Activated CD8-positive, alpha-beta memory T cell treated with anti-CD3 and anti-CD28 coated beads, Interleukin-2, amount 10 ng/mL, durations not matched to agents 7 days and 5 days (primary cell): ENCODE measurements at regions of chr7 and their contacts with region 1.

Region 1: DNA sequence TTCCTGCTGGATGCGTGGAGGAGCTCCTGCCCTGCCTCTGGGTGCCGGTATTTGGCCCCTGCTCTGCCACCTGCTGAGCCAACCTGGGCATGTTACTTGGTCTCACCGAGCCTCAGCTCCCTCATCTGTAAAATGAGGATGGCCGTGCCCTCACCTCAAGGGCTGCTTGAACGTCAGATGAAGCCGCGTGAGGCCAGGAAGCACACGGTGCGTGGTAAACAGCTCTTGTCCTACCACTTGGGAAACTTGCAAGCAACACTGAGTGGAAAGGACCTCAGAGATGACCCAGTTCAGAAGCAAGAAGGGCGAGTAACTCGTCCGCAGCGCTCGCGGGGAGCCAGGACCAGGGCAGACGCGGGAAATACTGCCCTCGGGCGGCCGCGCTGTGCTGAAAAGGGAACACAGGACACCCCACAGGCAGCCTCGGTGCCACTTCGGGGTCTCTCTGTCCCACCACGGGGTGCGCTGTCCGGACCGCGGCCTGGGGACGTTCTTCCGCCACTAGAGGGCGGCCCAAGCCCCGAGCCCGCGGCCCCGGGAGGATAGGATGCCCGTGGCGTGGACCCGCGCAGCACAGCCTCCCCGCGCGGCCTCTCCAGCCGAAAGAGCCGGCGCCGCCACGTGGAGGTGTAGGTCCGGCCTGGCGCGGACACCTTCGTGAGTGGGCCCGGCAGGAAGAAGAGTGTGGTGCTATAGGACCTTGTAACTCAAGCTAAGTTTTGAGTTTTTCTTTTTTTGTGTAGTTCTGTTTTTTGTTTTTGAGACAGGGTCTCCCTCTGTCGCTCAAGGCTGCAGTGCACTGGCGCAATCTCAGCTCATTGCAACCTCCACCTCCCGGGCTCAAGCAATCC is 94.1 kb downstream of the PRKAG2 start:
- DNase-seq: peak; percentile 82
- ATAC-seq: peak; percentile 94
- H3K4me3 Mint-ChIP-seq: peak overlapping the region; percentile 41
- H3K27ac Mint-ChIP-seq: peak overlapping the region; percentile 30
- H3K4me1 Mint-ChIP-seq: peaks cover 7% of the 10 kb centered on the region
- H3K27me3 Mint-ChIP-seq: no peaks in the 10 kb centered on the region

Region 2: DNA sequence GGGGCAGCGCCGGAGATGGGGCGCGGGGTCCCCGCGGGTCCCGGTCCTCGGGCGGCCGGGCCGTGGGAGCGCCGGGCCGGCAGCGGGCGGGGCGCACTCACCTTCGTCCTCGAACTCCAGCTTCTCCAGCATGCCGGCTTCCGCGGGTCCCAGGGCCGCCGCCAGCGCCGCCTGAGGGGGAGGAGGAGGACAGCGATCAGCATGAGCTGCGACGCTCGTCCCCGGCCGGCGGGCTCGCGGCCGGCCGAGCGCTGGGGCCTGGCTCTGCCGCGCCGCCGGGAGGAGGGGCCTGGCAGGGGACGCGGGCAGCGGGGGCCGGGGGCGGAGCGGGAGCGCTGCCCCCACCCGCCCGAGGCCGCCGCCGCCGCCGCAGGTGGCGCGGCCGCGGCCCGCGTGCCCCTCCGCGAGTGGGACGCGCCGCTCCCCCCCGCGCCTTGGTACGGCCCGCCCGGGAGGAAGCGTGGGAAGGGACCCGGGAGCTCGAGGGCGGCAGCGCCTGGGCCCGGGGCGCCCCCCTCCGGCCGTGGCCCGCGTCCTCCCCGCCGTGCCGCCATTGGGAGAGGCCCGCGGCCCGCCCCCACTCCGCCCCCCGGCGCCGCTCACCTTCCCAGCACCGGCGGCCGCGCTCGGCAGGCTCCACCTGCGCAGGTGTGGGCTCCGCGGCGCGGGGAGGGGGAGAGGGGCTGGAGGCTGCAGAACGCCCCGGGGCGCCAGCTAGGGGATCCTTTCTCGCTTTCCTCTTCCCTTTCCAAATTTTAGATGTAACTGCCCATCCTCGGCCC is 150.7 kb before region 1 on chr7:
- CTCF ChIA-PET with region 1: interaction called, 20 read pairs
- DNase-seq: peak; percentile 89
- ATAC-seq: peak; percentile 84
- H3K4me3 Mint-ChIP-seq: peak overlapping the region; percentile 85
- H3K27ac Mint-ChIP-seq: peak overlapping the region; percentile 95
- H3K4me1 Mint-ChIP-seq: peaks cover 29% of the 10 kb centered on the region
- H3K27me3 Mint-ChIP-seq: no peaks in the 10 kb centered on the region

Region 3: DNA sequence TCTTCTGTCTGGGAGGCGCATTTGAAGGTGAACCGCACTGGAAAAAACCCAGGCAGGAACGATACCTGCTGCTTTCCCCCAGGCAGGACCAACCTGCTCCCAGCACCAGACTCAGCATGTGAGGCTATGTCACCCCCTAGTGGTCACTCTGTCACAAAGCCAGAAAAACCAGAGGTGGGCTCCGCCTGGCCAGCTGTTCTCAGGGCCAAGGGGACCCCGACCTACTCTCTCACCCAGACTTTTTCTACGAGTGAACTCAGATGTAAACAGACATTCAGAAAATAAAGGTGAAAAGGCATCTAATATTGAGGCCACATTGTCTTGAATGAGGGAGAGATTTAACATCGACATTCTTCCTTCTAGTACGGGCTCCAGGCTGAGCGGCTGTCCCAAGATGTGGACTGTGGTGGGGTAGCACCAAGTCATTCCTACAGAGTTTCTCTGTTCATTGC is 23.2 kb before region 1 on chr7:
- CTCF ChIA-PET with region 1: interaction called, 36 read pairs
- DNase-seq: peak; percentile 71
- ATAC-seq: peak; percentile 59
- H3K4me3 Mint-ChIP-seq: no peak overlapping the region
- H3K27ac Mint-ChIP-seq: no peak overlapping the region
- H3K4me1 Mint-ChIP-seq: peaks cover 23% of the 10 kb centered on the region
- H3K27me3 Mint-ChIP-seq: no peaks in the 10 kb centered on the region

Region 4: DNA sequence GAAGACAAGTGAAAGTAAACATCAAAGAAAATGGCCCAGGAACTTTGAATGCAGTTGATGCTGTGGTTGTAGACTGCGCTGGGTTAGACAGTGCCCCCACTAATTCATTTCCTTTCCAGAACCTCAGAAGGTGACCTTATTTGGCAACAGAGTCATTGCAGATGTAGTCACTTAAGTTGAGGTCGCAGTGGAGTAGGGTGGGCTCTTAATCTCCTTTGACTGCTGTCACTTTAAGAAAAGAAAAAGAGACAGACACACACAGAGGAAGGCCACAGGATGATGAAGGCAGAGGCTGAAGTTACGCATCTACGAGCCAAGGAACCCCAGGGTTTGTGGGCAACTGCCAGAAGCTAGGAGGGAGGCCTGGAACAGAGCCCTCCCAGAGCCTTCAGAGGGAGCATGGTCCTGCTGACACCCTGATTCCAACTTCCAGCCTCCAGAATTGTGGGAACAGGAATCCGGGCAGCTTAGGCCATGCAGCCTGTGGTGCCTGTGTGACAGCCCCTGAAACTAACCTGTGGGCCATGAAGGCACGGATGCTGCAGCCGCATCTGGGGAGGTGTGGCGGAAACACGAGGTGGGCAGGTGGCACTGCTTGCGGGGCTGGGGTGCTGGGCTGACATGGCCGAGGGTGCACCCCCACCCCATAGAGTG is 13.5 kb before region 1 on chr7:
- CTCF ChIA-PET with region 1: interaction called, 69 read pairs
- DNase-seq: peak; percentile 74
- ATAC-seq: peak; percentile 94
- H3K4me3 Mint-ChIP-seq: peak overlapping the region; percentile 54
- H3K27ac Mint-ChIP-seq: peak overlapping the region; percentile 92
- H3K4me1 Mint-ChIP-seq: peaks cover 53% of the 10 kb centered on the region
- H3K27me3 Mint-ChIP-seq: no peaks in the 10 kb centered on the region

Region 5: DNA sequence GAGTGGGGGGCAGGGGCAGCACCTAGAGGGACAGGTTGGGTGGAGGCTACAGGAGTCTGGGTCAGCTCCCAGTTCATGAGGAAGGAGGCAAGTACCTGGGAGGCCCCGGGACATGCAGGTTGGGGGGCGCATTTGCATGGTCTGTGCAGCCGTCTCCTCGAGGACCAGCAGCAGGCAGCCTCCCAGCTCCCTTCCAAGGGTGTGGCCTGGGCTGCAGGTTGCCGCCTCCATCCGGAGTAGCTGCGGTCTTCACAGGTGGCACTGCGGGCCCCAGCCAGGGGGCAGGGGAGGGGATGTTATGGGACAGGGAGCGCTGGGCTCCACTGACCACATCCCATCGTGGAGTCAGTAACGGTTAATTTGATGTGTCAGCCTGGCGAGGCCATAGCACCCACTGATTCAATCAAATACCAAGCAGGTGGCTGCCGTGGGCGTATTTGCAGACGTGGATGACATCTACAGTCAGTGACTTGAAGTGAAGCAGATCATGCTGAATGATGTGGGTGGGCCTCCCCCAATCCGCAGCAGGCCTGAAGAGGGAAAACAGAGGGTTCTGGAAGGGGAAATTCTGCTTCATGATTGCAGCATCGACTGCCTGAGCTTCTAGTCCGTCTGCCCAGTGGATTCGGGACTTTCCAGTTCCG is 12.5 kb after region 1 on chr7:
- CTCF ChIA-PET with region 1: interaction called, 24 read pairs
- DNase-seq: peak; percentile 75
- ATAC-seq: peak; percentile 76
- H3K4me3 Mint-ChIP-seq: no peak overlapping the region
- H3K27ac Mint-ChIP-seq: peak overlapping the region; percentile 29
- H3K4me1 Mint-ChIP-seq: peaks cover 13% of the 10 kb centered on the region
- H3K27me3 Mint-ChIP-seq: no peaks in the 10 kb centered on the region

Region 6: DNA sequence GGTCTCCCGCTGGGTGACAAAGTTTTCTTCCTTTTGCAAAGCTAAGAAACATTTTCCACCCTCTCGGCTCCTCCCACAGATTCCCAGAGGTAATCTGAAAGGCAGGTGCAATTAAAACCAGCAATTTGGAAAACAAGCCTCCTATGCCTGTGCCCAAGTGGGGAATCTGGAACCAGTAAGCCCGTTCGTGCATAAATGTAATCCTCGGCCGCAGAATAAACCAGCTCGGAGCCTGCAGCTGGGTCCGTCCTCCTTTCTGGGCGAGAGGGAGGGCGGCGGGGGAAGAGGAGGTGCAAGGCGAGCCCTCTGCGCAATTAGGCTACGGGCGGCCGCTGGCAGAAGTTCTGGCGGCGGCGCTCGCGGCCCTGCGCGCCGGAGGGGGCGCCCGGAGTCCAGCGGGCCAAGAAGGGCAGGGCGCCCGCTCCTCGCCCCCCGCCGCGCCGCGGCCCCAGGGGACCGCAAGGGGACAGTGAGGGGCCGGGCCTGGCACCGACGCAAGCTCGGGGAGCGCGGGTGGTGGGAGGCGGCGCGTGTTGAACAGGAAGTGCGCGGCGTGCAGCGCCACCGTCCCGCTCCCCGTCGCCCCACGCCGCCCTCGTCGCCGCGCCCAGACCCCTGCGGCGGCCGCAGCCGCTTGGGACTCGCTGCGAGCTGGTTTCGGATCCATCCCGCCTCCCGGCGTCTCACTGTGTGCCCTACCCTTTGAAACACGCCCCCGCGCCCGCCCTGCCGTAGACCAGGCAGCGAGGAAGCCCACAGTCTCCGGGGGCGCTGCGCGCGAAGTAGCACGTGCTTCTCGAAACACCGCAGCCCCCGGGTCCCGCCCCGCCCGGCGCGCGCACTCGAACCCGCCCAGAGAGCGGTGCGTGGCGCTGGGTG is 94.3 kb after region 1 on chr7 and contains the start of gene PRKAG2:
- CTCF ChIA-PET with region 1: interaction called, 18 read pairs
- DNase-seq: peak; percentile 78
- ATAC-seq: peak; percentile 67
- H3K4me3 Mint-ChIP-seq: peak within 1 kb of the TSS; percentile 83
- H3K27ac Mint-ChIP-seq: peak within 1 kb of the TSS; percentile 70
- H3K4me1 Mint-ChIP-seq: peaks cover 7% of the 10 kb centered on the region
- H3K27me3 Mint-ChIP-seq: peaks cover 19% of the 10 kb centered on the region
- total RNA-seq, gene PRKAG2: 18.4 to 29.9 TPM

Region 7: DNA sequence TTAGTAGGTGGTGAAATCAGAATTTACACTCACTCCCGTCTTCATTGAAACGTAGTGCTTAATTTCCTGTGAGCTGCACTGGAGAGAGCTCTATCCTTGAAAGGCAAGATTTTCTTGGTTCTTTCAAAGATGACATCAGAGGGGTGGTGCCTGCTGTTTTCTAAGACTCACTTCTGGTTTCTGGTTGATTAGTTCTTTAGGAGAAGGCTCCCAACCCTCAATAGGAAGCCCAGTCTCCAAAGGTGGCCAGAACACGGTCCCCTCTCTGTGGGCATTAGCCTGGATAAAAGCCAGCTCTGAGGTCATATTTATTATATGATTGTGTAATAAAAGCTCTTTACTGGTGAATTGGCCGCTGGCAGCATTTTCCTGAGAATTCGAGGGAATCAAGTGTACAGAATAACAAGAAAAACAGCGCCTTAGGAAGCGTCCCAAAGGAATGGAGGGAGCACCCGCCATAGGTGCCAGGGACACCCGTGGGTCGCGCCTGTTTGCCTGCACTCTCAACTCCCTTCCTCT is 149.6 kb after region 1 on chr7:
- CTCF ChIA-PET with region 1: interaction called, 11 read pairs
- DNase-seq: no peak
- ATAC-seq: no peak
- H3K4me3 Mint-ChIP-seq: no peak overlapping the region
- H3K27ac Mint-ChIP-seq: no peak overlapping the region
- H3K4me1 Mint-ChIP-seq: peaks cover 15% of the 10 kb centered on the region
- H3K27me3 Mint-ChIP-seq: peaks cover 9% of the 10 kb centered on the region